Right cardiac atrium (tissue), 5 donors: ENCODE measurements at regions of chr5 and their contacts with region 1.

Region 1: DNA sequence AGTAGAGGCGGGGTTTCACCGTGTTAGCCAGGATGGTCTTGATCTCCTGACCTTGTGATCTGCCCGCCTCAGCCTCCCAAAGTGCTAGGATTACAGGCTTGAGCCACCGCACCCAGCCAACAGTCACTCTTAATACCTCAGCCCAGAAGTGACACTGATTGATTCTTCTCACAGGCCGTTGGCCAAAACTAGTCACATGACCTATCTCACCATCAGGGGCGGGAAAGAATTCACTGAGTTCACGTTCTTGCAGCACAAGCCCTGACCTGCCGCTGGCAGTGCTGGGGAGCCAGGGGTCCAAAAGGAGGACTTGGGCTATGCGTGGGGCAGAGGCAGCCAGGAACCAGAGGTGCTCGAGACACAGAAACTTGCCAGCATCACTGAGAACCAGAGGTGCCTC is 55.0 kb upstream of the CPLX2 start:
- DNase-seq: no peak
- ATAC-seq: no peak
- H3K4me3 ChIP-seq: no peak overlapping the region
- H3K27ac ChIP-seq: no peak overlapping the region
- H3K4me1 ChIP-seq: no peaks in the 10 kb centered on the region
- H3K27me3 ChIP-seq: no peaks in the 10 kb centered on the region

Region 2: GRCh38 chr5:174920906-174921550 is 895.3 kb before region 1 on chr5:
- intact Hi-C with region 1: no loop called
- DNase-seq: no peak
- ATAC-seq: no peak
- H3K4me3 ChIP-seq: no peak overlapping the region
- H3K27ac ChIP-seq: no peak overlapping the region
- H3K4me1 ChIP-seq: peaks cover 2% of the 10 kb centered on the region
- H3K27me3 ChIP-seq: no peaks in the 10 kb centered on the region

Region 3: GRCh38 chr5:175681045-175681967 is 135.0 kb before region 1 on chr5:
- intact Hi-C with region 1: no loop called
- DNase-seq: no peak
- ATAC-seq: peak; percentile 64 to 69
- H3K4me3 ChIP-seq: no peak overlapping the region
- H3K27ac ChIP-seq: peak overlapping the region; percentile 95
- H3K4me1 ChIP-seq: peaks cover 6% of the 10 kb centered on the region
- H3K27me3 ChIP-seq: no peaks in the 10 kb centered on the region

Region 4: DNA sequence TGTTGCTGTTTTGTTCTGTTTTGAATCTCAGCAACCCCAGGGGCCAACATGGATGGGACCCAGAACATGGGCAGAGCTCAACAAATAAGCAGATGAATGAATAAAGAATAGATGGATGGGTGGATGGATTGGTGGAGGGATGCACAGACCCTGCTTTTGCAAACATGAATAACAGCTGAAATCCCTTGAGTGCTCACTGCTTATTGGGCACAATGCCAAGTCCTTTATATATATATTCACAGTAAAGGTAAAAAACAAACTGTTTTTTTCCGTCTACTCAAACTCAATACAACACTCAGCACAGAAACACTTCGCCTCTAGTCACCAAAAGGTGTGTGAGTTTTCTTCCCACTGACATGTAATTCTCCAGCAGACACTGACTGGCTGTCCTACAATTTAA is 45.2 kb before region 1 on chr5:
- intact Hi-C with region 1: loop called in 1 of 4 experiments (anchors 2 kb)
- DNase-seq: no peak
- ATAC-seq: no peak
- H3K4me3 ChIP-seq: no peak overlapping the region
- H3K27ac ChIP-seq: no peak overlapping the region
- H3K4me1 ChIP-seq: no peaks in the 10 kb centered on the region
- H3K27me3 ChIP-seq: peaks cover 6% of the 10 kb centered on the region